Dorsolateral prefrontal cortex (tissue), 120 donors: ENCODE measurements at regions of chr19 and their contacts with region 1.

Region 1: GRCh38 chr19:35716801-35717666 is 769 bp upstream of the KMT2B start:
- DNase-seq: peak; percentile 74 to 96 (median 92)
- H3K4me3 ChIP-seq: peak overlapping the region; percentile 62 to 100 (median 90)
- H3K27ac ChIP-seq: peak overlapping the region; percentile 67 to 97 (median 93)
- H3K27me3 ChIP-seq: no peaks in the 10 kb centered on the region
- CTCF ChIP-seq: peak; percentile 66 to 96 (median 84)

Region 2: GRCh38 chr19:35545001-35545911 is 171.8 kb before region 1 on chr19 and contains the start of gene TMEM147:
- intact Hi-C with region 1: loop called (anchors 2 kb)
- DNase-seq: peak; percentile 85 to 96 (median 92)
- H3K4me3 ChIP-seq: peak within 1 kb of the TSS; percentile 66 to 100 (median 97)
- H3K27ac ChIP-seq: peak within 1 kb of the TSS in 56 of 59 donors; percentile 25 to 91 (median 80)
- H3K27me3 ChIP-seq: no peaks in the 10 kb centered on the region
- CTCF ChIP-seq: peak in 38 of 56 donors; percentile 5 to 63 (median 28)
- total RNA-seq, gene TMEM147: 38.2 to 73.0 (median 54.7) TPM

Region 3: DNA sequence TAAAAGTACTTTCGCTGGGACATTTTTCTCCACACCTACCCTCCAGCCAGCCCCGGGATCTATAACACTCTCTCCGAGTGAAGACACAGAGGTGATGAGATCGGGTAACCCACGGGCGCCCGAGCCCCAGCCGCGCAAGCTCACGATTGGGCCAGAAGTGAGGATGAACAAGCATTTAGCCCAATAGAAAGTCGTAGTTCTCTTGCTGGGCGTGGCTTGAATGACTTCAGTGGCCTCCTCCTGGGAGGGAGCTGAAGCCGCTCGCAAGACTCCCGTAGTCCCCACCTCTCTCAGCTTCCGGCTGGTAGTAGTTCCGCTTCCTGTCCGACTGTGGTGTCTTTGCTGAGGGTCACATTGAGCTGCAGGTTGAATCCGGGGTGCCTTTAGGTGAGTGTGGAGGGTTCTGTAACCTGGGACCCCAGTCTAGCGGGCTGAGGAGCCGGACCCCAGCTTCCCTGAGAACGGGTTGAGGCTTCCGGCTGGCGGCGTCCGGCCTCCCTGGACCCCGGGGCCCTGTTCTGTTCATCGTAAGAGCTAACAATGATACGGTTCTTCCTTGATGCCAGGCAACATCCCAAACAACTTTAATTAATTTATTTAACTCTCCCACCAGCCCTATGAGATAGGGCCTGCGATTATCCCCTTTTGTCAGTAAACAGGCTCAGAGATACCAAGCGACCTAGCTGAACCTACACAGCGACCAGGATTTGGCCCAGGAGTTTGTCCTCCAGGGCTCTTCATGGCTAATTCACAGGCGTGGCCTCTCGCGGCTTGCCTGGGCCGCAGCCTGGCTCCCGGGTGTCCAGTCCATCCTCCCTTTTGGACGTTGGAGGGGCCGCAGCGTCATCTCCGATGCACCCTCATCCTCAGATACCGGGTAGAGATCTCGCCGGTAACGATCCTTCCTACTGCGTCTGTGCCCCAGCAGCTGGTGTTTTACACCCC is 68.7 kb before region 1 on chr19 and contains the start of gene COX6B1:
- intact Hi-C with region 1: loop called in 1 of 2 experiments (anchors 5 kb)
- DNase-seq: peak; percentile 80 to 99 (median 96)
- H3K4me3 ChIP-seq: peak within 1 kb of the TSS; percentile 61 to 99 (median 88)
- H3K27ac ChIP-seq: peak within 1 kb of the TSS in 57 of 59 donors; percentile 23 to 92 (median 80)
- H3K27me3 ChIP-seq: peaks cover 0 to 1% (median 0%) of the 10 kb centered on the region in 45 donors
- CTCF ChIP-seq: peak in 16 of 56 donors; percentile 2 to 48 (median 19)
- total RNA-seq, gene COX6B1: 243 to 552 (median 394) TPM

Region 4: DNA sequence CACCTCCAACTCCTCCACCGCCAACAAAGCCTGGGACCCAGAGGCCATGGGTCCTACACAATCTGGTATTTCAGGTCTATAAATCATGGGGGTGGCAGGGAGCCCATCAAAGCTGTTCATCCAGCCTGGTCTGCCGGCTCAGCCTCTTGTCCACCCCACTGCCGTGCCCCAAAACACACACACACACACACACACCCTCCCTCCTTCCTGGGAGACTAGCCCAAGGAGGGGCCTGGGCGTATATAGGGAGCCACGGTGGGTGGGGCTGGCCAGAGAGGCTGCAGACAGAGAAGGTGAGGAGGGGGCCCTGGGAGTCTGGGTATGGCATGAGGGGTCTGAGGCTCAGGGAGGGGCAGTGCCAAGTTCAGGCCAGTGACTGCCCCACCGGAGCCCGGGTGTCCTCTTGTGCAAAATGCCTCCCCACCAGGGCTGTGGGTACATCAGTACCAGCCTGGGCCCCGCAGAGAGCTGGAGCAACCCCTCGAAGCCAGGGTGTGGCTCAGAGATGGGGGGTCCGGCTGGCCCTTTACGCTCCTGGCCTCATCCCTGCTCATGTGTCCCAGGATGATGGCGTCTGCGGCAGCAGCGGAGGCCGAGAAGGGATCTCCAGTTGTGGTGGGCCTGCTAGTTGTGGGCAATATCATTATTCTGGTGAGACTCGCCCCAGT is 50.7 kb before region 1 on chr19 and contains the start of gene UPK1A:
- intact Hi-C with region 1: no loop called
- DNase-seq: no peak
- H3K4me3 ChIP-seq: no peak within 1 kb of the TSS
- H3K27ac ChIP-seq: no peak within 1 kb of the TSS
- H3K27me3 ChIP-seq: peaks cover 0 to 5% (median 0%) of the 10 kb centered on the region in 45 donors
- CTCF ChIP-seq: no peak
- total RNA-seq, gene UPK1A: 0.39 to 1.3 (median 0.61) TPM in 17 of 120 experiments, not detected in the others

Region 5: GRCh38 chr19:35693830-35694599 is 23.0 kb before region 1 on chr19:
- intact Hi-C with region 1: loop called (anchors 1 to 2 kb)
- DNase-seq: peak; percentile 74 to 91 (median 86)
- H3K4me3 ChIP-seq: peak overlapping the region in 5 of 59 donors; percentile 4 to 26 (median 20)
- H3K27ac ChIP-seq: no peak overlapping the region
- H3K27me3 ChIP-seq: no peaks in the 10 kb centered on the region
- CTCF ChIP-seq: peak; percentile 85 to 100 (median 96)

Region 6: GRCh38 chr19:35702223-35703012 is 14.6 kb before region 1 on chr19:
- intact Hi-C with region 1: loop called in 1 of 2 experiments (anchors 2 kb)
- DNase-seq: peak; percentile 97 to 100 (median 99)
- H3K4me3 ChIP-seq: peak overlapping the region; percentile 51 to 91 (median 71)
- H3K27ac ChIP-seq: peak overlapping the region in 20 of 59 donors; percentile 25 to 75 (median 46)
- H3K27me3 ChIP-seq: no peaks in the 10 kb centered on the region
- CTCF ChIP-seq: peak in 26 of 56 donors; percentile 1 to 52 (median 20)

Region 7: GRCh38 chr19:35748106-35749020 is 31.3 kb after region 1 on chr19 and contains the start of gene LIN37:
- intact Hi-C with region 1: loop called (anchors 1 kb)
- DNase-seq: peak; percentile 99 to 100 (median 100)
- H3K4me3 ChIP-seq: peak within 1 kb of the TSS; percentile 66 to 100 (median 92)
- H3K27ac ChIP-seq: peak within 1 kb of the TSS in 50 of 59 donors; percentile 1 to 92 (median 70)
- H3K27me3 ChIP-seq: no peaks in the 10 kb centered on the region
- CTCF ChIP-seq: peak in 48 of 56 donors; percentile 9 to 62 (median 40)
- total RNA-seq, gene LIN37: 10.0 to 30.5 (median 18.1) TPM

Region 8: GRCh38 chr19:35931161-35931873 is 214.3 kb after region 1 on chr19:
- intact Hi-C with region 1: loop called in 1 of 2 experiments (anchors 1 kb)
- DNase-seq: peak; percentile 98 to 99 (median 98)
- H3K4me3 ChIP-seq: peak overlapping the region; percentile 24 to 68 (median 49)
- H3K27ac ChIP-seq: peak overlapping the region; percentile 63 to 97 (median 91)
- H3K27me3 ChIP-seq: no peaks in the 10 kb centered on the region
- CTCF ChIP-seq: peak; percentile 70 to 99 (median 92)